CD8-positive, alpha-beta T cell (primary cell): ENCODE measurements at regions of chr12 and their contacts with region 1.

Region 1: DNA sequence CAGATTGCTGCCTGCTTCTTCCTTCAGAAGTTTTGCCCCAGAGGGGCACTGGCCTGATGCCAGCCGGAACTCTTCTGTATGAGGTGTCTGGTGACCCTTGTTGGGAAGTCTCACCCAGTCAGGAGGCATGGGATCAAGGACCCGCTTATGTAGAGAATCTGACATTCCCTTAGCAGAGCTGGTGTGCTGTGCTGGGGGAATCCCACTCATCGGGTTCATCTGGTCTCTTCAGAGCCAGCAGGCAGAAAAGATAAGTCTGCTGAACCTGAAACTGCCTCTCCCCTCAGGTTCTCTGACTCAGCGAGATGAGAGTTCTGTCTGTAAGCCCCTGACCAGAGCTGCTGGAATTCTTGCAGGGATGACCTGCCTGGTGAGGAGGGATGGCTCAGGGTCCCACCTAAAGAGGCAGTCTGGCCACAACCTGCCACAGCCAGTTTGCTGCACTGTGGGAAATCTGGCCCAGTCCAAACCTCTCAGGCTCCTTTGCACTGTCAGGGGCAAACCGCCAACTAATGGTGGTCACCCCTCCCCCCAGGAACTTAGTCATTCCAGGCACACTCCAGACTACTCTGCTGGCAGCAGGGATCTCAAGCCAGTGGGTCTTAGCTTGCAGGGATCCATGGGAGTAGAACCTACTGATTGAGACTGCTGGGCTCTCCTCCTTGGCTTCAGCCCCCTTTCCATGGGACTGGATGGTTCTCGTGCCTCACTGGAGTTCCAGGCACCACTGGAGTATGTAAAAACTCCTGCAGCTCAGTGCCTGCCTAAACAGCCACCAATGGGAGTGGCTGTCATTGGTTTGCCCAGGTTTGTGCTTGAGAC is 4.1 kb downstream of the CLEC2D start:
- DNase-seq: peak in 7 of 9 experiments; percentile 44 to 82 (median 63)
- ATAC-seq: peak; percentile 37
- H3K4me3 ChIP-seq: peak overlapping the region; percentile 50 to 68
- H3K4me3 Mint-ChIP-seq: peak overlapping the region; percentile 88
- H3K27ac ChIP-seq: peak overlapping the region; percentile 42 to 74
- H3K27ac Mint-ChIP-seq: peak overlapping the region; percentile 95
- H3K4me1 ChIP-seq: peaks cover 44% of the 10 kb centered on the region
- H3K4me1 Mint-ChIP-seq: peaks cover 76% of the 10 kb centered on the region
- H3K27me3 ChIP-seq: no peaks in the 10 kb centered on the region
- H3K27me3 Mint-ChIP-seq: no peaks in the 10 kb centered on the region
- CTCF ChIP-seq: no peak

Region 2: DNA sequence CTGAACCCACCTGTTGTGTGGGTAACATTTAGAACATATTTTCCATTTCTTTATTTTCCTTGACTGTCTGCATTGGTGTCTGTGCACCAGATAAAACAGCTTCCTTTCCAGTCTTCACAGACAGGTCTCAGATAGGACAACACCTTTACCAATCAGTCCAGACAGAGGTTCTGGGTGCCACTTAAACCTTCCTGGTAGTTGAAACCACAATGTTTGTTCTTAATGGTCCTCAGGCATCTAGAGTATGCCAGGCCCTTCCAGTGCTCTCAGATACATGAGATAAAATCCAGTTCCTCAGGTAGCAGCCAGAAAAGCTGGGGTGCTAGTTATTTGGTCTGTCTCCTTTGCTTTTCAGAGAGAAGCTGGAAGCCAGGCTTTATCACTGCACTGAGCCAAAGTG is 11.1 kb before region 1 on chr12:
- CTCF ChIA-PET with region 1: interaction called, 7 read pairs
- POLR2A ChIA-PET with region 1: interaction called, 281 read pairs
- intact Hi-C with region 1: no loop called
- DNase-seq: peak in 1 of 9 experiments; percentile 38
- ATAC-seq: peak; percentile 44
- H3K4me3 ChIP-seq: no peak overlapping the region
- H3K4me3 Mint-ChIP-seq: peak overlapping the region; percentile 53
- H3K27ac ChIP-seq: peak overlapping the region in 1 of 2 experiments; percentile 52
- H3K27ac Mint-ChIP-seq: peak overlapping the region; percentile 88
- H3K4me1 ChIP-seq: peaks cover 83% of the 10 kb centered on the region
- H3K4me1 Mint-ChIP-seq: peaks cover 91% of the 10 kb centered on the region
- H3K27me3 ChIP-seq: no peaks in the 10 kb centered on the region
- H3K27me3 Mint-ChIP-seq: no peaks in the 10 kb centered on the region
- CTCF ChIP-seq: no peak

Region 3: DNA sequence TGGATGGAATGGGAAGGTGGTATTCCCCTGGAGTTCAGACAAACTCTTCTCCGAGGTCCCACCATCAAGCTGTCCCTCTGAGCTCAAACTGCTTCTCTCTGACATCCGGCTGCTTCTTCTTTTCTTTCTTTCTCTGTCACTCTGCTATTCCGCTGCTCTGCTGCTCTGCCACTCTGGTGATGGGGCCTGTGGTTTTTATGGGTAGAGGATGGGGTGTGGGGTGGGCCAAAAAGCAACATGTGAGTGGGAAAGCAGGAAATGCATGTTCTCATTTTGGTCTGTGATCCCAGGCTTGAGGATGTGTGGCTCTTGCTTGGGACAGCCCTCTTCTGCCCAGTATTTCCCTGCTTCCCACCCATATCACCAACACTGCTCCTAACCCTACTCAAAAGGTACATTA is 28.6 kb after region 1 on chr12:
- CTCF ChIA-PET with region 1: interaction called, 3 read pairs
- POLR2A ChIA-PET with region 1: interaction called, 13 read pairs
- intact Hi-C with region 1: loop called (anchors 2 to 5 kb)
- DNase-seq: peak in 8 of 9 experiments; percentile 41 to 82 (median 58)
- ATAC-seq: peak; percentile 72
- H3K4me3 ChIP-seq: peak overlapping the region; percentile 20 to 22
- H3K4me3 Mint-ChIP-seq: peak overlapping the region; percentile 56
- H3K27ac ChIP-seq: peak overlapping the region; percentile 47 to 78
- H3K27ac Mint-ChIP-seq: peak overlapping the region; percentile 94
- H3K4me1 ChIP-seq: peaks cover 46% of the 10 kb centered on the region
- H3K4me1 Mint-ChIP-seq: peaks cover 79% of the 10 kb centered on the region
- H3K27me3 ChIP-seq: no peaks in the 10 kb centered on the region
- H3K27me3 Mint-ChIP-seq: no peaks in the 10 kb centered on the region
- CTCF ChIP-seq: no peak